K562 (cell line): ENCODE measurements at regions of chr11 and their contacts with region 1.

Region 1: DNA sequence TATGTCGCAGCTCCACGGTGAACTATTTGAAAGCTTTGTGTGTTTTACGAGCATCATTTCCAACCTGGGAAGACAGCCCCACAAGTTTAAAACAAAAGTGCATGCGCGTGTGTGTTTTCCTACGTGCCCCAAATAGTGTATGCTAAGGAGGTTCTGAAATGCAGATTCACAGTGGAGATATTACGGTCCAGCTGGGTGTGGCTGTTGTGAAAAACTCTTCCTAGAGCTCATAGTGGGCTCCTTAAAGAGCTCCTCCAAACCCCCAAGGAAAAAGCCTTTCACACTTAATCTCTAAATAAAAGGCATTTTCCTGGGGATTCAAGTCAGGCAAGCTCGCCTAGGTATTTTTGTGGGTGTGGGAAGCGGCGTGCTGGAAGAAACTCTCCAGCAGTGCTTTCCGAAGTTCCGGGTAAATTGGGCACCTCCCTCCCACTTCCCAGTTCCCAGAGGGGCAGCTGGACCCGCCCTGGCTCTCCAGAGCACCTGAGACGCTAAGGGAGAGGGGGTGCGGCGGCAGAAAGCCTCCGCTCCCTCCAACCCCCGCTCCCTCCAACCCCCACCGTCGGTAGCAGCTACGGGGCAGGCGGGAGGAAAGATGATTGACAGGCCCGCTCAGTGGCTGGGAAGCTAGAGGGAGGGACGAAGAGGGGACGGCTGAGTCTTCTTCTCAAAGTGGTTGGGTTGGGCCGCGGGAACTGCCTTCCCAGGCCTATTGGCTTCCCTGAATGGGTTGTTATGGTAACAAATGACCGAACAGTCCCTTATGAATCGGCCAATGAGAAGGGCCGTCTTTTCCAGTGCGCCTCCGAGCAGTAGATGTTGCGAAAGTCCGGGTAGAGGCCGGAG is 558 bp upstream of the PCF11 start:
- DNase-seq: peak; percentile 92 to 99 (median 95)
- ATAC-seq: peak; percentile 83
- H3K4me3 ChIP-seq: peak overlapping the region; percentile 52
- H3K27ac ChIP-seq: peak overlapping the region; percentile 86
- H3K4me1 ChIP-seq: peaks cover 16 to 30% of the 10 kb centered on the region in 2 experiments
- H3K27me3 ChIP-seq: no peaks in the 10 kb centered on the region
- CTCF ChIP-seq: no peak
- EP300 ChIP-seq: no peak
- POLR2A ChIP-seq: peak; percentile 49
- RAD21 ChIP-seq: no peak; a peak in 1 of 4 replicates

Region 2: GRCh38 chr11:83071567-83072349 is 84.6 kb before region 1 on chr11 and contains the start of gene RAB30:
- CTCF ChIA-PET with region 1: no interaction called
- POLR2A ChIA-PET with region 1: interaction called, 8 read pairs
- in situ Hi-C with region 1: no loop called
- intact Hi-C with region 1: loop called (anchors 2 kb)
- DNase-seq: peak; percentile 91 to 99 (median 94)
- ATAC-seq: peak; percentile 97
- H3K4me3 ChIP-seq: peak within 1 kb of the TSS; percentile 68
- H3K27ac ChIP-seq: peak within 1 kb of the TSS; percentile 86
- H3K4me1 ChIP-seq: peaks cover 12% of the 10 kb centered on the region in 2 experiments; a peak in 2 of 5 replicates
- H3K27me3 ChIP-seq: no peaks in the 10 kb centered on the region
- CTCF ChIP-seq: no peak; a peak in 1 of 6 replicates
- EP300 ChIP-seq: peak; percentile 23; the same call in 1 of the 2 replicates
- POLR2A ChIP-seq: peak; percentile 97
- RAD21 ChIP-seq: peak; percentile 11 to 38; a peak in 3 of 4 replicates
- polyA plus RNA-seq, gene RAB30: 0.68 to 1.0 TPM

Region 3: DNA sequence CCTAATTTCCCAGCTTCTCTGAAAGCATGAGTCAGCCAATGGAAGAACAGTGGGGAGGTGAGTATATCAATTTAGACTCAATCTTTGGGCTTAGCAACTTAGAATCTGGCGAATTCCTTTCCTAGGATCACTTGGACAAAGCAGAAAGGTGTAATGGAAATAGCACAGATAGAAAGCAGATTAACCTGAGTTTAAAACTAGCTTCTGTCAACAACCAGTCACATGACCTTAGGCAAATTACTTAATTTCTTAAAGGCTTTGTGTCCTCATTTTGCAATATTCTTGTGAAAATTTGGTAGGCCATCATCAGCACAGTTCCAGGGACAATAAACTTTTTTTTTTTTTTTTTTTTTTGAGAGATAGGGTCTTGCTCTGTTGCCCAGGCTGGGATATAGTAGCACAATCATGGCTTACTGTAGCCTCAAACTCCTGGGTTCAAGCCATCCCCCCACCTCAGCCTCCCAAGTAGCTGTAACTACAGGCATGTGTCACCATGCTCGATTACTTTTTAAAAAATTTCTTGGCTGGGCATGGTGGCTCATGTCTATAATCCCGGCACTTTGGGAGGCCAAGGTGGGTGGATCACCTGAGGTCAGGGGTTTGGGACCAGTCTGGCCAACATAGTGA is 40.2 kb before region 1 on chr11:
- CTCF ChIA-PET with region 1: no interaction called
- POLR2A ChIA-PET with region 1: interaction called, 4 read pairs
- in situ Hi-C with region 1: no loop called
- intact Hi-C with region 1: loop called (anchors 2 kb)
- DNase-seq: no peak
- ATAC-seq: peak; percentile 7; the same call in 1 of the 3 replicates
- H3K4me3 ChIP-seq: no peak overlapping the region
- H3K27ac ChIP-seq: no peak overlapping the region
- H3K4me1 ChIP-seq: peaks cover 0 to 6% of the 10 kb centered on the region in 2 experiments; a peak in 2 of 5 replicates
- H3K27me3 ChIP-seq: no peaks in the 10 kb centered on the region
- CTCF ChIP-seq: no peak
- EP300 ChIP-seq: no peak
- POLR2A ChIP-seq: no peak
- RAD21 ChIP-seq: no peak

Region 4: GRCh38 chr11:83168756-83169155 is 12.4 kb after region 1 on chr11:
- CTCF ChIA-PET with region 1: no interaction called
- POLR2A ChIA-PET with region 1: interaction called, 13 read pairs
- in situ Hi-C with region 1: no loop called
- intact Hi-C with region 1: no loop called
- DNase-seq: no peak
- ATAC-seq: no peak; the same call in 2 of the 3 replicates
- H3K4me3 ChIP-seq: no peak overlapping the region
- H3K27ac ChIP-seq: no peak overlapping the region
- H3K4me1 ChIP-seq: peaks cover 0 to 2% of the 10 kb centered on the region in 2 experiments; a peak in 2 of 5 replicates
- H3K27me3 ChIP-seq: no peaks in the 10 kb centered on the region
- CTCF ChIP-seq: no peak
- EP300 ChIP-seq: no peak
- POLR2A ChIP-seq: no peak; the same call in 1 of the 2 replicates
- RAD21 ChIP-seq: no peak

Region 5: GRCh38 chr11:83285771-83286528 is 129.6 kb after region 1 on chr11 and contains the start of gene CCDC90B:
- CTCF ChIA-PET with region 1: no interaction called
- POLR2A ChIA-PET with region 1: interaction called, 3 read pairs
- in situ Hi-C with region 1: no loop called
- intact Hi-C with region 1: loop called (anchors 2 kb)
- DNase-seq: peak; percentile 85 to 98 (median 88)
- ATAC-seq: peak; percentile 95
- H3K4me3 ChIP-seq: peak within 1 kb of the TSS; percentile 76
- H3K27ac ChIP-seq: peak within 1 kb of the TSS; percentile 99
- H3K4me1 ChIP-seq: peaks cover 6 to 11% of the 10 kb centered on the region in 2 experiments; a peak in 4 of 5 replicates
- H3K27me3 ChIP-seq: no peaks in the 10 kb centered on the region
- CTCF ChIP-seq: peak; percentile 22 to 69 (median 64); a peak in 5 of 6 replicates
- EP300 ChIP-seq: no peak
- POLR2A ChIP-seq: peak; percentile 99
- RAD21 ChIP-seq: no peak
- polyA plus RNA-seq, gene CCDC90B: 60.6 to 63.6 TPM